HCT116 (cell line): ENCODE measurements at regions of chr14 and their contacts with region 1.

Region 1: GRCh38 chr14:59897761-59898383 is 22.1 kb upstream of the LRRC9 start:
- DNase-seq: peak; percentile 10
- ATAC-seq: peak; percentile 81
- H3K4me3 ChIP-seq: no peak overlapping the region
- H3K27ac ChIP-seq: no peak overlapping the region
- H3K4me1 ChIP-seq: no peaks in the 10 kb centered on the region
- H3K27me3 ChIP-seq: no peaks in the 10 kb centered on the region
- CTCF ChIP-seq: peak; percentile 44 to 57 (median 54); a peak in 5 of 6 replicates
- POLR2A ChIP-seq: no peak
- RAD21 ChIP-seq: peak; percentile 68

Region 2: DNA sequence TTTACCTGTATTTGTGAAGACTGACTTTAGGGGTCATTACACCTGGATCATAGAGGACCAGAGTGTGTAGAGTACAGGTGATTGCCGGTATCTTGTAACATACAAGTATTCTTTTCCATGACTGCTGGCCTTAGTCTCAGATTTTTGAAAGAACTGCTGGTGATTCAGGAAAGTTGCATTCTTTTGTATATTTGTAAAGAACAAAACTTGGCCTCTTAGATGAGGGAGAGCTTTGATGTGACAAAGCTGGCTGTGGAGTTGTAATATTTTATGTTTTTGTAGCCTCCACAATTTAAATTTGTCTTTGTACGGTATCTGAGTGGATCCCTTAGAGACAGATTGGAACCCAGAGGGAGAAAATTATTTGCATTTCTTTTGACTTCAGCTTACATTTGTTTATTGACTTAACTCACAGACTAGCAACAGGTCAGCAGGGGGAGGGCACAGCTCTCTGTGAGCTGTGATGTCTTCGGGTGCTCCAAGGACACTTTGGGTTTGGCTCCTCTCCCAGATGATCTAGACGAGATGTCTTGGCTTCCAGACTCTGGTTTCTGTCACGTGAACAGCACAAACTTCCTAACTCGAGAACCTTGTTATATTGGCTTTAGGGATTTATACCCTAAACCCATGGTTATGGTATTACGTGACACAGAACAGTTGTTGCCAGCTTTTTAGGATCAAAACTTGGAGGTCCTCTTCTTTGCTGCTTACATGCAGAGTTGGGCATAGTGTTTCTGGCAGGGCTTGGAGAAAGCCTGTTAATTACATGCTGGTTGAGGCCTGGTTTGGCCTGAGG is 643.5 kb before region 1 on chr14:
- CTCF ChIA-PET with region 1: no interaction called
- POLR2A ChIA-PET with region 1: no interaction called
- RAD21 ChIA-PET with region 1: no interaction called
- intact Hi-C with region 1: no loop called
- DNase-seq: no peak
- ATAC-seq: no peak
- H3K4me3 ChIP-seq: no peak overlapping the region
- H3K27ac ChIP-seq: no peak overlapping the region
- H3K4me1 ChIP-seq: peaks cover 2 to 6% of the 10 kb centered on the region in 2 experiments; a peak in 2 of 4 replicates
- H3K27me3 ChIP-seq: no peaks in the 10 kb centered on the region
- CTCF ChIP-seq: no peak
- POLR2A ChIP-seq: no peak
- RAD21 ChIP-seq: no peak

Region 3: GRCh38 chr14:59483900-59484638 is 413.8 kb before region 1 on chr14 and contains the starts of genes JKAMP and L3HYPDH:
- CTCF ChIA-PET with region 1: interaction called, 10 read pairs
- POLR2A ChIA-PET with region 1: no interaction called
- RAD21 ChIA-PET with region 1: no interaction called
- intact Hi-C with region 1: no loop called
- DNase-seq: peak; percentile 90
- ATAC-seq: peak; percentile 88
- H3K4me3 ChIP-seq: peak within 1 kb of the TSS; percentile 81 to 93
- H3K27ac ChIP-seq: peak within 1 kb of the TSS; percentile 87
- H3K4me1 ChIP-seq: peaks cover 13 to 33% of the 10 kb centered on the region in 2 experiments
- H3K27me3 ChIP-seq: no peaks in the 10 kb centered on the region
- CTCF ChIP-seq: peak; percentile 35 to 54 (median 47); a peak in 5 of 6 replicates
- POLR2A ChIP-seq: peak; percentile 43
- RAD21 ChIP-seq: no peak
- total RNA-seq, gene JKAMP: 46.5 TPM
- total RNA-seq, gene L3HYPDH: 19.5 TPM

Region 4: DNA sequence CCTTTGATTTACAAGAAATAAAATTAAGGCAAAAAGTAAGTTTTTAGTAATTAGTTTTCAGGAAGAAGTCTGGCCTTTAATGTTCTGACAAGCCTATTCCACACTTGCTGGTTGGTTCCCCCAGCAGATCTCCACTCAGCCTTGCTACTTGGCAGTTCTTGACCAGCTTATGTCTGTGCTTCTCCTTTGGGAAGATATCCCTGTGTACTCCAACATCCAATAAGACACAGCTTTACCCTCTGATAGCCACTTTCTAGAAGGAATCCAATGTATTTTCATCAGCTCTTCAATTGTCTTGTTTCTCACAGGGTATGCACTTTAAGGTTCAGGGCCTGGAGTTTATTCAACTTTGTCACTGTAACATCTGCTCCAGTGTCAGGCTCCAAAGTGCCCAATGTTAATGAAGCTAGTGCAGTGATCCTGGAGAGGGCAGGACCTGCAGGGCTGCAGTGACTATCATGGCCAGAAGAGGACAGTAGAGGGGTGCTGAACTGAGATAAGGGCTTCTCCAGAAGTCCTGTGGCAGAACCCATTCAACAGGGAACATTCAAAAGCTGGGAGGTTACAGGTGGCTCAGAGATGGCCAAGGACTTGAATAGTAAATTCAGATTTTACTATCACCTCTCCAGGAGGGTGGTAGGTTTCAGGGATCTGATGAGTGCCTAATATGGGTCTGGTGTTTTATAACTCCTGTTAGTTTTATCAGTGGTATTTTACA is 390.6 kb before region 1 on chr14:
- CTCF ChIA-PET with region 1: interaction called, 13 read pairs
- POLR2A ChIA-PET with region 1: no interaction called
- RAD21 ChIA-PET with region 1: no interaction called
- intact Hi-C with region 1: loop called (anchors 5 kb)
- DNase-seq: peak; percentile 42
- ATAC-seq: peak; percentile 96
- H3K4me3 ChIP-seq: no peak overlapping the region
- H3K27ac ChIP-seq: no peak overlapping the region
- H3K4me1 ChIP-seq: no peaks in the 10 kb centered on the region
- H3K27me3 ChIP-seq: no peaks in the 10 kb centered on the region
- CTCF ChIP-seq: peak; percentile 62 to 99 (median 94)
- POLR2A ChIP-seq: no peak
- RAD21 ChIP-seq: peak; percentile 61

Region 5: GRCh38 chr14:59632381-59632780 is 265.5 kb before region 1 on chr14:
- CTCF ChIA-PET with region 1: interaction called, 36 read pairs
- POLR2A ChIA-PET with region 1: no interaction called
- RAD21 ChIA-PET with region 1: interaction called in 1 of 2 experiments, 3 read pairs
- intact Hi-C with region 1: loop called (anchors 1 kb)
- DNase-seq: peak; percentile 33
- ATAC-seq: peak; percentile 80
- H3K4me3 ChIP-seq: no peak overlapping the region
- H3K27ac ChIP-seq: no peak overlapping the region
- H3K4me1 ChIP-seq: no peaks in the 10 kb centered on the region
- H3K27me3 ChIP-seq: no peaks in the 10 kb centered on the region
- CTCF ChIP-seq: peak; percentile 69 to 75 (median 71)
- POLR2A ChIP-seq: no peak
- RAD21 ChIP-seq: peak; percentile 70

Region 6: DNA sequence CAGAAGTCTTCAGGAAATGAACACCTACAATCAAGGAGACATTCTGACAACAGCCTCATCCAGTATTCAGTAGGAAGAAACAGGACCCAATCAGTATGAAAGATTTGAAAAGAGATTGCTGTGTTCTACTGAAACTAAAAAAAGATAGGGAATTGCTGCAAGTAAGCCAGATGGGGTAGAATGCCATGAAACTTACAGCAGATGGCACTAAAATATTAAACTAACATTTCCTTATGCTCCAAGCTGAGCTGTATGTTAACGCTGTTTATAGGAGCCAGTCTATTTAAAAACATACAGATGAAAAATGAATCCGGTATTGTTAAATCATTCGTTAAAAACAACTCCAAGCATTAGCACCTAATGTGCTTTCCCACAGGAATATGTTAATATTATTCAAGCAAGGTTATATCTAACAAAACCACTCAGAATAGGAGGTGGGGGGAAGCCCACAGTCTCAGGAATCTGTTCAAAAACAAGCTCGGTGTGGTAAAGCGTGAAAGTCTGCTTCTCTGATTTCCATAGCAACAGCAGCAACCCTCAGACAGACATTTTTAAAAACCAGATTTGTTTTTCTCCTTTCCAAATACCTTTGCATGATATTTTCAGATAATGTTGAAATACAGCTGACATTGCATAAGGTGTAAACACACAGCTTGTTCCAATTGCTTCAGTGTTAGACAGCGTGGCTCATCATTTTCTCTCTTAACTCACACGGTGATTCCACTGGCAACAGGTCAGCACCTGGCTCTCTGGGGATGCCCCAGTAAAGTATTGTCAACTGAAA is 189.9 kb before region 1 on chr14:
- CTCF ChIA-PET with region 1: interaction called, 28 read pairs
- POLR2A ChIA-PET with region 1: no interaction called
- RAD21 ChIA-PET with region 1: no interaction called
- intact Hi-C with region 1: no loop called
- DNase-seq: no peak
- ATAC-seq: no peak
- H3K4me3 ChIP-seq: no peak overlapping the region
- H3K27ac ChIP-seq: no peak overlapping the region
- H3K4me1 ChIP-seq: no peaks in the 10 kb centered on the region
- H3K27me3 ChIP-seq: peaks cover 10% of the 10 kb centered on the region
- CTCF ChIP-seq: no peak
- POLR2A ChIP-seq: no peak
- RAD21 ChIP-seq: peak; percentile 23; the same call in 1 of the 2 replicates

Region 7: DNA sequence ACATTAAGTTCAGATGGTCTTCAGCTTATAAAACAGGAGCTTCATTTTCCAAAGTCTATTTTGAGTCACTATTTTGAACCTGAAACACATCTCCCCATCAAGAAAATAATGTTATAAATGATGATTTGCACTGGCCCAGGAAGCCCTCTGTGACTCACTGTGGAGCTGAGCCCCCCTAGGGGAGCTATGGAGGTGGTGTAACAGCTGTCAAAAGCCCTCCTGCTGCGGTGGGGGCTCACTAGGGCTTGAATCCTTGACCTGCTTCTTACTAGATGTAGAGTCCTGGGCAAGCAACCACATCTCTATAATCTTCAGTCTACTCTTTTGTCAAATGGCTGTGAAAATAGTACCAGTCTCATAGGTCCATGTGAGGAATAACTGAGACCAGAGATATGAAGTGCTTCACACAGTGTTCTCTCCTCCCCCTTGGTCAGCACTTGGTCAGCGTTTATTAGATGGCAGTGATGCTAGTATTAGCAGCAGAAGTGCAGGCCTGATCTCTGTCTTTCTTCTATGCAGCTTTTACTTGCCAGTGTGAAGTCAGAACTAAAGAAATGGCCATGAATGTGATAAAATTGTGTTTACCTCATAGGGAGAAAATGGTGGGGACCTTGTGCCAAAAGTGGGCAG is 110.7 kb before region 1 on chr14:
- CTCF ChIA-PET with region 1: no interaction called
- POLR2A ChIA-PET with region 1: no interaction called
- RAD21 ChIA-PET with region 1: no interaction called
- intact Hi-C with region 1: no loop called
- DNase-seq: no peak
- ATAC-seq: no peak
- H3K4me3 ChIP-seq: no peak overlapping the region
- H3K27ac ChIP-seq: no peak overlapping the region
- H3K4me1 ChIP-seq: no peaks in the 10 kb centered on the region
- H3K27me3 ChIP-seq: peaks cover 11% of the 10 kb centered on the region
- CTCF ChIP-seq: no peak
- POLR2A ChIP-seq: no peak
- RAD21 ChIP-seq: no peak

Region 8: DNA sequence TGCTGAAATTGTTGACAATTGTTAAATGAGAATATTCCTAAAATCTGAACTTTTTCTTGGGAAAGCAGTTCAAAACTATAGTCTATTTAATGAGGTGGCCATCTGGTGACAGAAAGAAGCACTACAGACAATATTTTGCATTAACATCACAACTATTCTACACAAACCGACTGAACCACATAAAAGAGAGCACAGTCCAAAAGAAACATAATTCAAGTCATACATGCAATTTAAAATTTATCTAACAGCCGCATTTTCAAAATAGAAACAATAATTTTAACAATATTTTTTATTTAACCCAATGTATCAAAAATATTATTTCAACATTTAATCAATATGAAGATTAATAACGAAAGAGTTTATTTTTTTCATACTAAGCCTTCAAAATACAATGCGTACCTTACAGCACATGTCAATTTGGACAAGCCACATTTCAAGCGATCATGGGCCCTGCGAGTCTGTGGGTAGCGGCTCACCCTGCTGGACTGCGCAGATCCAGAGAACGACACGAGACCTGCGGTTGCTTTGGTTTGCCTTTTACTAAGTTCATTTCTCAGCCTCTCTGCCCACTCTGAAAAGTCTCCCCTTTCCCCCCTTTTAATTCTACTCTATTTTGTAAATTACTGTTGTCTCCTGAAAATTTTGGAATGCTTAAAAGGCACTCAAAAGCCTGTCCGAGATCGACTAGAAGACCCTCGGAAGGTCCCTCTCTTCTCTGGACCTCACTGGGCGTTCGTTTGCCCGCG is 21.1 kb after region 1 on chr14:
- CTCF ChIA-PET with region 1: interaction called, 15 read pairs
- POLR2A ChIA-PET with region 1: no interaction called
- RAD21 ChIA-PET with region 1: no interaction called
- intact Hi-C with region 1: no loop called
- DNase-seq: peak; percentile 16
- ATAC-seq: no peak; the same call in 1 of the 2 replicates
- H3K4me3 ChIP-seq: no peak overlapping the region
- H3K27ac ChIP-seq: no peak overlapping the region
- H3K4me1 ChIP-seq: no peaks in the 10 kb centered on the region
- H3K27me3 ChIP-seq: no peaks in the 10 kb centered on the region
- CTCF ChIP-seq: peak; percentile 34 to 55 (median 37); a peak in 4 of 6 replicates
- POLR2A ChIP-seq: no peak
- RAD21 ChIP-seq: peak; percentile 45

Region 9: GRCh38 chr14:59986556-59987059 is 88.7 kb after region 1 on chr14:
- CTCF ChIA-PET with region 1: no interaction called
- POLR2A ChIA-PET with region 1: no interaction called
- RAD21 ChIA-PET with region 1: no interaction called
- intact Hi-C with region 1: no loop called
- DNase-seq: no peak
- ATAC-seq: no peak
- H3K4me3 ChIP-seq: no peak overlapping the region
- H3K27ac ChIP-seq: no peak overlapping the region
- H3K4me1 ChIP-seq: no peaks in the 10 kb centered on the region
- H3K27me3 ChIP-seq: no peaks in the 10 kb centered on the region
- CTCF ChIP-seq: no peak
- POLR2A ChIP-seq: no peak
- RAD21 ChIP-seq: no peak

Region 10: GRCh38 chr14:60008042-60008441 is 110.2 kb after region 1 on chr14:
- CTCF ChIA-PET with region 1: no interaction called
- POLR2A ChIA-PET with region 1: no interaction called
- RAD21 ChIA-PET with region 1: no interaction called
- intact Hi-C with region 1: no loop called
- DNase-seq: no peak
- ATAC-seq: no peak
- H3K4me3 ChIP-seq: no peak overlapping the region
- H3K27ac ChIP-seq: no peak overlapping the region
- H3K4me1 ChIP-seq: no peaks in the 10 kb centered on the region
- H3K27me3 ChIP-seq: no peaks in the 10 kb centered on the region
- CTCF ChIP-seq: no peak
- POLR2A ChIP-seq: no peak
- RAD21 ChIP-seq: no peak